Activated T-helper 1 cell treated with anti-CD3 and anti-CD28 coated beads, Interleukin-12 subunit alpha, Interleukin-12 subunit beta, Interleukin-2, Interleukin-4 antibody, amounts not matched to agents 30 ng/mL and 10 ng/mL and 1 ng/mL, durations not matched to agents 14 hours and 24 hours and 36 hours (primary cell): ENCODE measurements at regions of chr6 and their contacts with region 1.

Region 1: DNA sequence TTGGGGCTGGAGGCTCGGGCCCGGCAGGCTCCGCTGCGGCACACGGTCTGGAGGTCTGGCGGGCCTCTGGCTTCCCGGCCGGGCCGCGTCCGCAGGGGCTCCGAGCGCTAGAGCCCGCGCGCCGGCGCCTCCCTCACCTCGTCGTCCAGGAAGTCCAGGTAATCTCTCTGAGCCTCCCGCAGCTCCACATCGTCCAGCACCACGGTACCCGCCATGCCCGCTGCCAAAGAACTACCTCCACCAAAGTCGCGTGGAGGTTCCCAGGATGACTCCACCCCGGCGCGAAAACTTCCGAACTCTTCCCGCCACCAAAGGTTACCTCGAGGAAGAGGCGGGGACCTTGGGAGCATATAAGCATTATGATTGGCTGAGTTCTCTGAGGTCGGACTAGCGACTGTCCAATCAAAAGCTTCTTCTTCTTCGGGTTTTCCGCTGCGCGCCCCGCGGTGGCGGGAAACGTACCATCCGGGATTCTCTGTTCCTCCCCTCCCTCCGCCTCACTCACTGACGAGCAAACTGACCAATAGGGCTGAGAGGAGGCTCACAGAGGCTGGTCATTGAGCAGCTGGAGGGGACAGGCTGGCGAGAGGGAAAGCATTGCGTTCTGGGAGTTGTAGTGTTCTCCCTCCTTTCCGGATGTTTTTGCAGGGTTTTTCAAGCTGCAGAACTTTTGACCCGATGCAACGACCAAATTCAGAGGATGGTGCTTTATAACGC is at the start of gene MCM3:
- DNase-seq: peak; percentile 97
- H3K4me3 Mint-ChIP-seq: no peak within 1 kb of the TSS
- H3K27ac Mint-ChIP-seq: peak within 1 kb of the TSS; percentile 76
- H3K4me1 Mint-ChIP-seq: peaks cover 50% of the 10 kb centered on the region
- H3K27me3 Mint-ChIP-seq: no peaks in the 10 kb centered on the region
- total RNA-seq, gene MCM3: 212 and 214 TPM in 2 replicates

Region 2: GRCh38 chr6:52162940-52163908 is 121.4 kb before region 1 on chr6:
- intact Hi-C with region 1: loop called (anchors 1 kb)
- DNase-seq: no peak
- H3K4me3 Mint-ChIP-seq: no peak overlapping the region
- H3K27ac Mint-ChIP-seq: no peak overlapping the region
- H3K4me1 Mint-ChIP-seq: peaks cover 32% of the 10 kb centered on the region
- H3K27me3 Mint-ChIP-seq: peaks cover 42% of the 10 kb centered on the region

Region 3: DNA sequence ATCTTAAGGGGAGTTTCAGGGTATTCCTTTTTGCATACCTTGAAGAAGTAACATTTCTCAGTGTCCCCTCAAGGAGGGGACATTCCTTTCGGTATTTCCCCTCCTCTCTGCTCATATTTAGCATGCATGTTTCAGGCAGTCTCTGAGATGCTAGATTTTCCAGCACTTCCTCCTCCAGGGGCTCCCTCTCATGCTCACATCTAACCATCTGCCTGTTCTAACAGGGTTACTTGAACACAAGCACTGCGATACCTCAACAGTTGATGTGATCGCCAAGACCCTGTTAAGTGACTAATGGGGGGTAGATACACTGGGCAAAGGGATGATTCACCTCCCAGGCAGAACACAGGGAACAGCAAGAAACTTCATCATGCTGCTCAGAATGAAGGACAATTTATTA is 12.8 kb after region 1 on chr6:
- intact Hi-C with region 1: loop called (anchors 1 kb)
- DNase-seq: no peak
- H3K4me3 Mint-ChIP-seq: peak overlapping the region; percentile 23
- H3K27ac Mint-ChIP-seq: peak overlapping the region; percentile 53
- H3K4me1 Mint-ChIP-seq: peaks cover 40% of the 10 kb centered on the region
- H3K27me3 Mint-ChIP-seq: no peaks in the 10 kb centered on the region

Region 4: DNA sequence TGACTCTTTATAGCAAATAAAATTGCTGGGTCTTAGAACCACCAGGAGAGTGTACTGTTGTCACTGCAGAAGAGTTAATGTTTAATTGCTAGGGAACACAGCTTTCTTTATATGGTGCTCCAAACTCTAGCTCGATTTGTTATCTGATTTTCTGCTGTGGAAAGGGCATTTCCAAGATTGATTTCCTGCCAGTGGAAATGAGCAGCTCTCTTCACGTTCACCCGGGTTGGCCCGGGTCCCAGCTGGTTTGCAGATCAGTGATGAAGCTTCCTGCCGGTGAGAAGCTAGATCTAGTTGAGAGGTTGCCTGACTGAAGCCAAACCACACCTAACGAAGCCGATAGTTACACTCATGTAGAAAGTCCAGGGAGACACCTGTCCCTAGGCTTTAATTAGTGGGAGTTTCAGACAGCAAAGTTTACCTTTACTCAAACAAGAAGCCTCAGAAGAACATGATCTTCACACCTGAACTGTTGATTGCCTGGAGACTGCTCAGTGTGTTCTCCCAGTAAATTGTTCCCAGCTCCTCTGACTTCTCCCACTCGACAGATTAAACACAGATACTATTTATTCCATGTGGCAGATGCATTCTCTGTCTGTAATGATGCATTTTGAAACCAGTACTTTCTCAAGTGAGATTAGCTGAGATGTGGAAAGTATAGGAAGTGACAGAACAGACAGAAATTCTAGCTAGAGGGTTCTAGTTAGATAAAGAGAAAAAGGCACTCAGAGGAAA is 105.2 kb after region 1 on chr6:
- intact Hi-C with region 1: loop called (anchors 1 kb)
- DNase-seq: peak; percentile 45
- H3K4me3 Mint-ChIP-seq: peak overlapping the region; percentile 66
- H3K27ac Mint-ChIP-seq: peak overlapping the region; percentile 88
- H3K4me1 Mint-ChIP-seq: peaks cover 62% of the 10 kb centered on the region
- H3K27me3 Mint-ChIP-seq: peaks cover 4% of the 10 kb centered on the region

Region 5: GRCh38 chr6:52577022-52577777 is 292.6 kb after region 1 on chr6 and contains the start of gene TRAM2:
- intact Hi-C with region 1: loop called (anchors 5 kb)
- DNase-seq: peak; percentile 69
- H3K4me3 Mint-ChIP-seq: peak within 1 kb of the TSS; percentile 79
- H3K27ac Mint-ChIP-seq: peak within 1 kb of the TSS; percentile 66
- H3K4me1 Mint-ChIP-seq: peaks cover 39% of the 10 kb centered on the region
- H3K27me3 Mint-ChIP-seq: peaks cover 14% of the 10 kb centered on the region
- total RNA-seq, gene TRAM2: 2.1 and 2.5 TPM in 2 replicates

Region 6: DNA sequence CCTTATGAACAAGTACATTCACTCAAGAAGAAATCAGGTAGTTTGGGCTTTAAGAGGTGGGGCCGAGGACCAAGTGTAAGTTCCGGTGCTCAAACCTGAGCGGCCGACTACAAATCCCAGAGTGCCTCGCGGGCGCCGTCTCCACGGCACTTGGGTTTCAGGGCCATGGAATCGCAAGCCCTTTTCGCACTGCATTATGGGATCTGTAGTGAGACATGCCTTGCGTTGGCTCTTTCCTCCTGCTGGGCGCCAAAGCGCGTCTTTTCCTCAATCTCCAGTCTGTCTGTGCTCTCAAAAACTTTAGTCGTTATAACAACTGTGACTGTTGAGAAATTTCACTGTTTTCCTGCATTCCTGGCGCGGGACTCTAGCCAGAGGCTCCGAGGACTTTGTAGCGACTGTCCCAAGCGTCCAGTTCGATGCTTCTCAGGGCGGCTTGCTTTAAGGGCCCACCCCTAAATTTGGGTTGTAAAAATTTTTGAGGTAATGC is 780.2 kb after region 1 on chr6:
- intact Hi-C with region 1: loop called (anchors 1 kb)
- DNase-seq: peak; percentile 94
- H3K4me3 Mint-ChIP-seq: peak overlapping the region; percentile 99
- H3K27ac Mint-ChIP-seq: peak overlapping the region; percentile 99
- H3K4me1 Mint-ChIP-seq: peaks cover 46% of the 10 kb centered on the region
- H3K27me3 Mint-ChIP-seq: peaks cover 2% of the 10 kb centered on the region